Aorta (tissue), 5 donors: ENCODE measurements at regions of chr3 and their contacts with region 1.

Region 1: DNA sequence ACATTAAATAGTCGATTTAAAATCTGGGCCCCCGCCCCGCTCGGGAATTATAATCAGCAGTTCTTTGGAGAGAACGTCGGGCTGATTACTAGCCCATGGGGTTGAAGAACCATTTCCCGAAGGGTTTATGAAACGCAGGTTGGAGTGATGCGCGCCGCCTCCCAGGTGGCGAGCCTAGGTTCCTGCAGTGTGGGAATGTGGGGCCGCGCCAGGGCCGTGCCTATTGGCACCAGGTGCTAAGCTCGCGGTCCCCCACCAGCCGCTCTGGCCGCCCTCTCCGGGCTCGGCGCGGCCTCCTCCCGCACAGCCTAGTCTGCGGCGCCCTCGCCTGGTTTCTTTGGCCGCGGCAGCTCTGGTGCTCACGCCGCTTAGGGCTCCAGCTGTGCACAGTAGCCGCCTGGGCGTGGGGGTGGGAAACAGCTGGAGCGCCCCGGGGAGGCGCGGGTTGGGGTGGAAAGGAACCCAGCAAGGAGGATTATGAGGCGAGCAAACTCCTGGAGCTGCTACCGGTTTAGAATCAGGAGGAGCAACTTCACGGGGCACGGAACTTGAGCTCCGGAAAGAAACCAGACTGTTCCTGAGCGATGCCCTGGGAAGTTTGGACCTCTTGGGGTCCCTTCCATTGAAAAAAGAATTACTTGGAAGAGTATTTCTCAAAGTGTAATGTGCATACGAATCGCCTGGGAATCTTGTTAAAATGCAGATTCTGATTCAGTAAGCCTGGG is 5.6 kb upstream of the MECOM start:
- DNase-seq: peak; percentile 82 to 94
- ATAC-seq: peak; percentile 96
- H3K4me3 ChIP-seq: peak overlapping the region; percentile 31 to 64
- H3K27ac ChIP-seq: peak overlapping the region in 1 of 2 donors; percentile 24
- H3K4me1 ChIP-seq: no peaks in the 10 kb centered on the region
- H3K27me3 ChIP-seq: no peaks in the 10 kb centered on the region

Region 2: GRCh38 chr3:168961271-168961670 is 707.8 kb before region 1 on chr3:
- intact Hi-C with region 1: loop called in 1 of 2 experiments (anchors 5 kb)
- DNase-seq: no peak
- ATAC-seq: no peak
- H3K4me3 ChIP-seq: no peak overlapping the region
- H3K27ac ChIP-seq: no peak overlapping the region
- H3K4me1 ChIP-seq: no peaks in the 10 kb centered on the region
- H3K27me3 ChIP-seq: no peaks in the 10 kb centered on the region

Region 3: DNA sequence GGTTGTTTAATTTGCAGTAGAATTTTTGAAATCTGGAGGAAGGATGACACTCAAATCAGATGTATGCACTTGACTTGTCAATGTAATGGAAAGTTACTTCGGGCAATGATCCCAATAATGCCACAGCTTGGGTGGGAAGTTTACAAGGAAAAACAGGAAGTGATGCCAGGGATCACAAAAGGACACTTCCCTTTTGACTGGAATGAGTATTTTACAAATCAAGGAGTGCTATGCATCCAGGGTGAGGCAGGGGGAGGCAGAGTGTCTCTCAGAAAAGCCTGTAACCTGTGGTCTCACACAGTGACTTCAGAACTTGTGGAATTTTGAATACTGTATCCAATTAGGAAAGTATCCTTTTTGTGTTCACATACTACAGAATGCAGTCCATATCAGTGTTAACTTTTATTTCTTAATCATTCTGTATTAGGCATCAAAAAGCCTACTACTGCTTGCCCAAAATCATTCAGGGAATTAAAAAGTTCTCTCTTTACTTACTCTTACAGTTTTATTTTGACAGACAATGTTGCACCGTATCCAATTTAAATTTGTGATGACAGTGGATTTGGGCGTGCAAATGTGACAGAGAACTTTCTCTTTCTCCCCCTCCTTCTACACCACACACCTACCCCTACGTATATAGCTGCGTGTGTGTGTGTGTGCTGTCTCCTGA is 450.7 kb before region 1 on chr3:
- intact Hi-C with region 1: loop called (anchors 5 to 10 kb)
- DNase-seq: peak in 1 of 2 donors; percentile 55
- ATAC-seq: peak; percentile 70
- H3K4me3 ChIP-seq: no peak overlapping the region
- H3K27ac ChIP-seq: no peak overlapping the region
- H3K4me1 ChIP-seq: no peaks in the 10 kb centered on the region
- H3K27me3 ChIP-seq: no peaks in the 10 kb centered on the region

Region 4: GRCh38 chr3:169509359-169509758 is 159.8 kb before region 1 on chr3:
- intact Hi-C with region 1: loop called in 1 of 2 experiments (anchors 10 kb)
- DNase-seq: no peak
- ATAC-seq: no peak
- H3K4me3 ChIP-seq: no peak overlapping the region
- H3K27ac ChIP-seq: no peak overlapping the region
- H3K4me1 ChIP-seq: peaks cover 2 to 5% of the 10 kb centered on the region in 2 donors
- H3K27me3 ChIP-seq: no peaks in the 10 kb centered on the region

Region 5: GRCh38 chr3:169591983-169592644 is 77.0 kb before region 1 on chr3:
- intact Hi-C with region 1: no loop called
- DNase-seq: peak in 1 of 2 donors; percentile 42
- ATAC-seq: peak; percentile 38
- H3K4me3 ChIP-seq: peak overlapping the region in 1 of 2 donors; percentile 48
- H3K27ac ChIP-seq: peak overlapping the region; percentile 11 to 41
- H3K4me1 ChIP-seq: peaks cover 2 to 7% of the 10 kb centered on the region in 2 donors
- H3K27me3 ChIP-seq: no peaks in the 10 kb centered on the region

Region 6: DNA sequence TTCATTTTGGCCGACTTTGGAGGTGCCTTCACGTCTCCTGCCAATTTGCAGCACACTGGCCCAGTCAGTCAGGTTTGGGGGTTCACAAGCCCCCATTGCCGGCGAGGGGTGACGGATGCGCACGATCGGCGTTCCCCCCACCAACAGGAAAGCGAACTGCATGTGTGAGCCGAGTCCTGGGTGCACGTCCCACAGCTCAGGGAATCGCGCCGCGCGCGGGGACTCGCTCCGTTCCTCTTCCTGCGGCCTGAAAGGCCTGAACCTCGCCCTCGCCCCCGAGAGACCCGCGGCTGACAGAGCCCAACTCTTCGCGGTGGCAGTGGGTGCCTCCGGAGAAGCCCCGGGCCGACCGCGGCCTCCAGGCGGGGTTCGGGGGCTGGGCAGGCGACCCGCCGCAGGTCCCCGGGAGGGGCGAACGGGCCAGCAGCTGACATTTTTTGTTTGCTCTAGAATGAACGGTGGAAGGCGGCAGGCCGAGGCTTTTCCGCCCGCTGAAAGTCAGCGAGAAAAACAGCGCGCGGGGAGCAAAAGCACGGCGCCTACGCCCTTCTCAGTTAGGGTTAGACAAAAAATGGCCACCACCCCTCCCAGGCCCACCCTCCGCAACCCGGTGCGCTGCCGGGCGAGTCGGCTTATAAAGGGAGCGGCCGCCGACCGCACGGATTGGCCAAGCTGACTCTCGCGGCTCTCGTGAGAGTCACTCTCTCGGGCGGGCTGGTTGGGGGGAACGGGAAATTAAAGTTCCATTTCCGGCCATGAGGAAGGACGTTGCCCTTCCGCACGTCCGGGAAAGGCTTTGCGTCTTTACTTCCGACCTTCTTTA is 95.5 kb after region 1 on chr3 and contains the start of gene TERC:
- intact Hi-C with region 1: loop called in 1 of 2 experiments (anchors 5 kb)
- DNase-seq: peak; percentile 95 to 97
- ATAC-seq: peak; percentile 97
- H3K4me3 ChIP-seq: peak within 1 kb of the TSS; percentile 73 to 96
- H3K27ac ChIP-seq: peak within 1 kb of the TSS; percentile 97 to 99
- H3K4me1 ChIP-seq: no peaks in the 10 kb centered on the region
- H3K27me3 ChIP-seq: no peaks in the 10 kb centered on the region
- total RNA-seq, gene TERC: 12.4 TPM in 1 of 2 donors, not detected in the other